Activated B cell treated with CpG ODN at 0.5 μM for 24 hours (primary cell): ENCODE measurements at regions of chr14 and their contacts with region 1.

Region 1: DNA sequence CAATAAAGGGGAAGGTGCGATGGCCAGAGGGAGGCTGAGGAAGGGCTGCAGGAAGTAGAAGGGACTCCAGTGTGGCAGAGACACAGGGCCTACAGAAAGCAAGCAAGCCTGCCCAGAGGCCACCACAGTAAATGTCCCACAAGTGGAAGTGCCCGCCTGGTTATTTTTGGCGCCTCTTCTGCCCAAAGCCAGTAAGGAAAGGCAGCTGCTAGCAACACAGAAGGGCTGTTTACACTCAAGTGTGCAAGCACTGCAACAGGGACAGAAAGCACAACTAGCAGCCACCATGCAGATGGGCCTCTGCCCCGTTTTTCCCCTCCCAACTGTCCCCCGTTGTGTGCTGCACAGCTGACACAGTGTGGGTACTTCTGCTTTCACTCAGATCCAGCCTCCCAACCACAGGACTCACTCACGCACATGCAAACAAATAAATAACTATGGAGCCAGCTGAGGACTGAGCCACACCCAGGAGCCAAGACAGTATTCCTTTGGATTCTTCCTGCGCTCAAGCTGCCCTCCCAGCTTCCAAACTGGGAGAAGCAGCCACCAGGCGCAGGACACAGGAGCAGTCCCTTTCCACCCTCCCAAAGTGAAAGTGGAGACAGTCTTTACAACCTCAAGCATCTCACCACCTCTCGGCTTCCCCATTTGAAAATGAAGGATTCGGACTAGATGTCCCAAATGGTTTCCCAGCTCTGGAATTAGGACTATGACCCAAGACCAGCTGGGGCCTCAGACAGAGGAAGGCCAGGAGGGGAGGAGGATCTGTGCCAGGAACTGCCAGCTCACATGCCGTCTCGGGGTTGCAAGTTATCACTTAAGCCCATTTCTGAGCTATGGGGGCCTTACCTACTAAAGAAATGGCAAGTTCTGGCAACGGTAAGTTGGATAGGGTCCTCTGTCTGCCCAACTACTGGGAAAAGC is 40.0 kb upstream of the PNMA1 start:
- DNase-seq: peak; percentile 55
- ATAC-seq: peak; percentile 52
- H3K4me3 Mint-ChIP-seq: peak overlapping the region; percentile 77
- H3K27ac Mint-ChIP-seq: peak overlapping the region; percentile 92
- H3K4me1 Mint-ChIP-seq: peaks cover 95% of the 10 kb centered on the region
- H3K27me3 Mint-ChIP-seq: no peaks in the 10 kb centered on the region
- CTCF ChIP-seq: no peak

Region 2: GRCh38 chr14:73245401-73246325 is 508.6 kb before region 1 on chr14:
- CTCF ChIA-PET with region 1: no interaction called
- POLR2A ChIA-PET with region 1: interaction called, 12 read pairs
- intact Hi-C with region 1: no loop called
- DNase-seq: peak; percentile 65
- ATAC-seq: peak; percentile 87
- H3K4me3 Mint-ChIP-seq: peak overlapping the region; percentile 81
- H3K27ac Mint-ChIP-seq: peak overlapping the region; percentile 30
- H3K4me1 Mint-ChIP-seq: peaks cover 67% of the 10 kb centered on the region
- H3K27me3 Mint-ChIP-seq: peaks cover 15% of the 10 kb centered on the region
- CTCF ChIP-seq: no peak

Region 3: GRCh38 chr14:73662487-73662943 is 91.7 kb before region 1 on chr14:
- CTCF ChIA-PET with region 1: no interaction called
- POLR2A ChIA-PET with region 1: no interaction called
- intact Hi-C with region 1: no loop called
- DNase-seq: no peak
- ATAC-seq: no peak
- H3K4me3 Mint-ChIP-seq: no peak overlapping the region
- H3K27ac Mint-ChIP-seq: no peak overlapping the region
- H3K4me1 Mint-ChIP-seq: no peaks in the 10 kb centered on the region
- H3K27me3 Mint-ChIP-seq: no peaks in the 10 kb centered on the region
- CTCF ChIP-seq: no peak

Region 4: DNA sequence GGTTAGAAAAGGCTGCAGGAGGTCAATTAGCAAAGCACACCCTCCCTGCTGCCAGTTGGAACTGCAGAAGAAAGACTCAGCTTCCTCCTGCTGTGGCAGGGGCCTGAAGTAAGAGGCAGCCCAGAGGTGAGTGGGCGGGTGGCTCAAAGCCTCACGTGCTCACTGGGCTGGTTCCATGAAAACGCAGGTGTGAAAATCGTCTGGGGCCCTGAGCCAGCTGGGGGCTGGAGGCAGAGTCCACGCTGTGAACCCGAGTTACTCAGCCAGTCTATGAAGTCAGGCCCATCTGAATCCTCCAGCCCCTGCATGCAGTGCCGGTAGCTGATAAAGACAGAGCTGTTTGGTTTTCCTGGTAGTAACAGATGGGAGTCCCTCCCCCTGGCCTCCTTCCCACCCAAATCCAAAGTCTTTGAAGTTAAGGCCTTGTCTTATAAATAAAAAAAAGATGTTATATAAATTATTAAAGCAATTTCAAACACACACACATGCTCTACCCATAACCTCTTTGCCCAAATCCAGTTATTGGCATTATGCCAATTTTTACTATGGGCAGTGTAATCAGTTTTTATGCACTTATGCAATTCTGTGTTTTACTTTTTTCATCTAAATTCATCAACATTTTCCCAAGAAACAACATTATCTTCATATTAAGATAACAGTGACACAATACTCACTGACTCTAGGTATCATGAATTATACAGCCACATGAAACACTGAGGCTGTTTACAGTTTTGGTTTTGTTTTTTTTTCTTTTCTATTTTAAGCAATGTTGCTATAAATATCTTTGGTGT is 17.8 kb after region 1 on chr14:
- CTCF ChIA-PET with region 1: interaction called, 39 read pairs
- POLR2A ChIA-PET with region 1: interaction called, 493 read pairs
- intact Hi-C with region 1: loop called (anchors 2 kb)
- DNase-seq: peak; percentile 60
- ATAC-seq: peak; percentile 56
- H3K4me3 Mint-ChIP-seq: peak overlapping the region; percentile 74
- H3K27ac Mint-ChIP-seq: peak overlapping the region; percentile 95
- H3K4me1 Mint-ChIP-seq: peaks cover 88% of the 10 kb centered on the region
- H3K27me3 Mint-ChIP-seq: no peaks in the 10 kb centered on the region
- CTCF ChIP-seq: no peak

Region 5: DNA sequence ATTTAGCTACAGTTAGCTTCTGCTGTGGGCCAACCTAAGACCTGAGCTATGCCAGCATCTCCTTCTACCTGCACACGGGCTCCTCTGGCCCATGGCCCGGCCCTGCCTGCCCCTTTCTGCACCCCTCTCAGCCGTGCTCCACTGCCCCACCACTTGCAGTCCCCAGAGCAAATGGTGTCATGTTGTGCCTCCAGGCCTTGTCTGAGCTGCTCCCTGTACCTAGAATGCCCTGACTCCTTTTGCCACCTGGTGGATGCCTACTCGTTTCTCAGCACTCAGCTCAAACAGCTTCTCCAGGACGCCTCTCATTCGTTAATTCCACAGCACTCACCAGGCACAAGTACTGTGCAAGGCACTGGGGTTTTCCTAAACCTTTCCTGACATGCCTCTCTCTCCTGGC is 23.2 kb after region 1 on chr14:
- CTCF ChIA-PET with region 1: interaction called, 39 read pairs
- POLR2A ChIA-PET with region 1: interaction called, 493 read pairs
- intact Hi-C with region 1: no loop called
- DNase-seq: no peak
- ATAC-seq: peak; percentile 80
- H3K4me3 Mint-ChIP-seq: peak overlapping the region; percentile 12
- H3K27ac Mint-ChIP-seq: peak overlapping the region; percentile 67
- H3K4me1 Mint-ChIP-seq: peaks cover 69% of the 10 kb centered on the region
- H3K27me3 Mint-ChIP-seq: no peaks in the 10 kb centered on the region
- CTCF ChIP-seq: no peak

Region 6: GRCh38 chr14:73825551-73826188 is 71.4 kb after region 1 on chr14:
- CTCF ChIA-PET with region 1: interaction called, 5 read pairs
- POLR2A ChIA-PET with region 1: interaction called, 5 read pairs
- intact Hi-C with region 1: loop called (anchors 1 kb)
- DNase-seq: peak; percentile 61
- ATAC-seq: peak; percentile 99
- H3K4me3 Mint-ChIP-seq: no peak overlapping the region
- H3K27ac Mint-ChIP-seq: no peak overlapping the region
- H3K4me1 Mint-ChIP-seq: peaks cover 6% of the 10 kb centered on the region
- H3K27me3 Mint-ChIP-seq: no peaks in the 10 kb centered on the region
- CTCF ChIP-seq: peak; percentile 96